ENCODE measurements at regions of chr4 and their contacts with region 1.

Region 1: DNA sequence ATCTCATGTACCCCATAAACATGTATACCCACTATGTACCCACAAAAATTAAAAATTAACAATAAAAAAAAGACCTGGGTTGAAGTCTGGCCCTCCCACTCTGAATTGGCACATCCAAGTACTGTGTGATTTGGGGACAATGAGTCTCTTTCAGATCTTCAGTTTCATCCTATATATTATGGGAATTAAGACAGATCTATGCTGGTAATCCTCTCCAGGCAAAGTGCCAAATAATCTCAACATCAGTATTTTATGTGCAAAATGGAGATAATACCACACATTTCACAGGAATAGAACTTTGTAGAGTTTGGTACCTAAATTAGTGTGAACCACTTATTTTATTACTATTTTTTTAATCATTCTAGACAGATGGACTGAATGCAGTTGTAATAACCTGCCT is 11.0 kb upstream of the SCD5 start:
- DNase-seq: no peak
- H3K4me3 ChIP-seq: no peak overlapping the region
- H3K27ac ChIP-seq: no peak overlapping the region
- H3K4me1 ChIP-seq: peaks cover 6 to 7% of the 10 kb centered on the region in 2 donors
- H3K27me3 ChIP-seq: no peaks in the 10 kb centered on the region
- CTCF ChIP-seq: no peak
- POLR2A ChIP-seq: no peak

Region 2: DNA sequence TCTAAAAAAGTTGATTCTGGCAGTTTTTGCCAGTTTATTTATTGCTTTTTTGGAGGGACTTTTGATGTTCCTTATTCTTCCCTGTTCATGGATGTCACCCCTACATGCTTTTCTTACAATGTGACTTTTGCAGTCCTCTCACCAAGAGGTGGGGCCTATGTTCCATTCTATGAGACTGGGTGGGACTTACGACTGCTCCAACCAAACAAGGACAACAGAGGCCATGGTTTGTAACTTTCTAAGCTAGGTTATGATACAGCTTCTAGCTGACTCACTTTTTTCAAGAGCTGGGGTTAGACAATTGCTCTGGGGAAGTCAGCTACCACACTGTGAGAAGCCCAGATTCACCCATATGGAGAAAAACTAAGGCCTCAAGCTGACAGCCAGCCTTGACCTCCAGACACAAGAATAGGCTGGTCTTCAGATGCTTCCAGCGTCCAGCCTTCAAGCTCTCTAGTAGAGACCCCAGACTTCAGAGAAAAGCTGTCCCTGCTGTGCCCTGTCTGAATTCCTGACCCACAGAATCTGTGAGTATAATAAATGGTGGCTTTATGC is 339.8 kb before region 1 on chr4:
- intact Hi-C with region 1: loop called (anchors 5 kb)
- DNase-seq: peak in 1 of 2 donors; percentile 7
- H3K4me3 ChIP-seq: no peak overlapping the region
- H3K27ac ChIP-seq: no peak overlapping the region
- H3K4me1 ChIP-seq: no peaks in the 10 kb centered on the region
- H3K27me3 ChIP-seq: no peaks in the 10 kb centered on the region
- CTCF ChIP-seq: no peak
- POLR2A ChIP-seq: no peak

Measured in thyroid gland (tissue), 4 donors.